ENCODE measurements at regions of chr9 and their contacts with region 1.

Region 1: DNA sequence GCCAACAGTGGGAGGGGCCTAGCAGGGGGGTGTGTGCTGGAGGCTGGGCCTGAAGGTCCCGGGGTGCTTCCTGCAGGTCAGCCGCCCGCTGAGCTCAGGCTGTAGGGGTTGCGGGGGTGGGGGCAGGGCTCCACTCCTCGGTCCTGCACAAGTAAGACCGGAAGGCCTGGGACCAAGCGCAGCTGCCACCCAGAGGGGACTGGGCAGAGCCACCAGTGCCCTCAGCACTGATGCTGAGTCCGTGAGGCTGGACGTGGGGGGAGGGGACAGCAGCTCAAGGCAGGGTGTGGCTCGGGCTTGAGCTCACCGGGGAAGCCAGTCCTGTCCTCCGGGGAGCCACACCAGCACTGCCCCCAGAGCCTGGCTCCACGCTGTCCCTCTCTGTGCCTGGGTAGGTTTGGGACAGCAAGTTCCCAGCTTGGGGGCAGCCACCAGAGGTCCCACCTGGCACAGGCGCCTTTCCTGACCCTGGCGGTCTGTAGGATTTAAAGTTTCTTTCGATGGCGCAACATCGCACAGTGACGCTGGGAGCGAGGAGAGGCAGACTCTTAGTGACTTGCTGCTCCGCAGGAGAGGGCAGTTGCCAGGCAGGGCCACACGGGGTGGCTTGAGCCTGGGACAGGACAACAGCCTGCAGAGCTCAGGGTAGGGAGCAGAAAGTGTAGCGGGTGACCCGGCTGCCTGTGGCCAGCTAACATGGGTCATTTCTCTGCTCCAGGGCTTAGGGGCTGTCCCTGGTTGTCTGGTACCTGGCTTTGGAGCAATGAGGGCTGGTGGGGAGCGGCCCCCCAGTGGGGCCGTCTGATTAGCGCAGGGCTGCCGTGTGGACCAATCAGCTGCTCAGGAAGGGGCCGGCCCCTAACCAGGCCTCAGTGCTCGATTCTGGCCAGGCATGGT is 5.7 kb downstream of the LCN1 start:
- DNase-seq: no peak
- H3K4me3 ChIP-seq: no peak overlapping the region
- H3K27ac ChIP-seq: no peak overlapping the region
- H3K4me1 ChIP-seq: no peaks in the 10 kb centered on the region
- H3K27me3 ChIP-seq: peaks cover 61% of the 10 kb centered on the region
- CTCF ChIP-seq: no peak

Region 2: GRCh38 chr9:135797507-135798262 is 270.8 kb after region 1 on chr9:
- CTCF ChIA-PET with region 1: interaction called, 12 read pairs
- POLR2A ChIA-PET with region 1: no interaction called
- intact Hi-C with region 1: no loop called
- DNase-seq: peak in 1 of 2 experiments; percentile 33
- H3K4me3 ChIP-seq: no peak overlapping the region
- H3K27ac ChIP-seq: no peak overlapping the region
- H3K4me1 ChIP-seq: no peaks in the 10 kb centered on the region
- H3K27me3 ChIP-seq: no peaks in the 10 kb centered on the region
- CTCF ChIP-seq: peak; percentile 53

Measured in PC-9 (cell line).